ENCODE measurements at regions of chr5 and their contacts with region 1.

Region 1: GRCh38 chr5:151002250-151002649 is 18.1 kb upstream of the GPX3 start:
- DNase-seq: peak; percentile 70
- ATAC-seq: peak; percentile 62
- H3K4me3 ChIP-seq: no peak overlapping the region
- H3K27ac ChIP-seq: no peak overlapping the region
- H3K4me1 ChIP-seq: no peaks in the 10 kb centered on the region
- H3K27me3 ChIP-seq: no peaks in the 10 kb centered on the region
- CTCF ChIP-seq: peak; percentile 71

Region 2: DNA sequence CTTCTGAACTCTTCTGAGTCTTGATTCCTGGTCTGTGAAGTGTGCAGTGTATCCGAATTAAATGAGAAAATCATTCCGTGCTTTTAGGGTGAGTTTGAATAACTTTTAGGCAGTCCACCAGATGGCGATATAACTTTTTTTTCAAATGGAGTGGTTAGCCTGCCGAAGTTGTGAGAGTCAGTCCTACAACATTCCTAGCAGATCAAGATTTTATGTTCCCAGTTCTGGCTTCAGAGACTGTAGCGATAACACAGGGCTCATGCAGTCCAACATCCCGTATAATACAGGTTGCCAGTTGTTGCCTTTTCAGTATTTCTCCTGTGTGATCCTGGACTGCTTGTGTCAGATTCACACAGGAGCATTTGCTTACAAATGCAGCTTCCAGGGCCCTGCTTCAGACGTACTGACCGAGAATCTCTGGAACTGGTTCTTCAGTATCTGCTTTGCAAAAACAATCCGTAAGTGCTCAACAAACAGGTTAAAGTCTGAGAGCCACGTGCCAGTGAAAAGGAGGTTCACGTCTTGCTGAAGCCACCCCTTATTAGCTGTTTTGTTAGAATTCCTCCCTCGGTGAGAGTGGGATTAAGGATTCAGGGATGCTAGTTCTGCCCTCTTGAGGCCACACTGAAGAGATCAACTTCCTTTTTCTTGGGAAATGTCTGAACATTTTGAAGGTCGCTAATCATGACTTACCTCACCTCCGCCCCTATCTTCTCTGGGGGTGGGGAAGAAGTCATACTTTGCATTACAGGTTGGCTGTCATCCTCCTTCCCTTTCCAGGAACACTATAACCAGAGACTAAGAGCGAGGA is 200.9 kb before region 1 on chr5:
- CTCF ChIA-PET with region 1: no interaction called
- POLR2A ChIA-PET with region 1: no interaction called
- intact Hi-C with region 1: loop called (anchors 2 kb)
- DNase-seq: peak; percentile 82
- ATAC-seq: peak; percentile 93
- H3K4me3 ChIP-seq: peak overlapping the region; percentile 62
- H3K27ac ChIP-seq: no peak overlapping the region
- H3K4me1 ChIP-seq: no peaks in the 10 kb centered on the region
- H3K27me3 ChIP-seq: no peaks in the 10 kb centered on the region
- CTCF ChIP-seq: peak; percentile 67

Region 3: GRCh38 chr5:151034422-151035379 is 32.5 kb after region 1 on chr5:
- CTCF ChIA-PET with region 1: interaction called, 14 read pairs
- POLR2A ChIA-PET with region 1: no interaction called
- intact Hi-C with region 1: no loop called
- DNase-seq: peak; percentile 81
- ATAC-seq: peak; percentile 99
- H3K4me3 ChIP-seq: no peak overlapping the region
- H3K27ac ChIP-seq: peak overlapping the region; percentile 53
- H3K4me1 ChIP-seq: peaks cover 34% of the 10 kb centered on the region
- H3K27me3 ChIP-seq: no peaks in the 10 kb centered on the region
- CTCF ChIP-seq: no peak

Region 4: GRCh38 chr5:151115274-151115905 is 113.1 kb after region 1 on chr5:
- CTCF ChIA-PET with region 1: interaction called, 27 read pairs
- POLR2A ChIA-PET with region 1: no interaction called
- intact Hi-C with region 1: loop called (anchors 1 kb)
- DNase-seq: peak; percentile 77
- ATAC-seq: peak; percentile 86
- H3K4me3 ChIP-seq: no peak overlapping the region
- H3K27ac ChIP-seq: no peak overlapping the region
- H3K4me1 ChIP-seq: no peaks in the 10 kb centered on the region
- H3K27me3 ChIP-seq: no peaks in the 10 kb centered on the region
- CTCF ChIP-seq: peak; percentile 97

Region 5: GRCh38 chr5:151164686-151165392 is 162.6 kb after region 1 on chr5:
- CTCF ChIA-PET with region 1: interaction called, 3 read pairs
- POLR2A ChIA-PET with region 1: interaction called, 5 read pairs
- intact Hi-C with region 1: loop called (anchors 1 kb)
- DNase-seq: peak; percentile 90
- ATAC-seq: peak; percentile 99
- H3K4me3 ChIP-seq: no peak overlapping the region
- H3K27ac ChIP-seq: no peak overlapping the region
- H3K4me1 ChIP-seq: no peaks in the 10 kb centered on the region
- H3K27me3 ChIP-seq: no peaks in the 10 kb centered on the region
- CTCF ChIP-seq: peak; percentile 96